Calu3 (cell line): ENCODE measurements at regions of chr3 and their contacts with region 1.

Region 1: GRCh38 chr3:128584412-128585020 is 66.1 kb downstream of the RPN1 start:
- DNase-seq: peak; percentile 96
- H3K4me3 Mint-ChIP-seq: no peak overlapping the region
- H3K27ac Mint-ChIP-seq: no peak overlapping the region
- H3K4me1 Mint-ChIP-seq: peaks cover 16% of the 10 kb centered on the region
- H3K27me3 Mint-ChIP-seq: peaks cover 41% of the 10 kb centered on the region
- CTCF ChIP-seq: peak; percentile 88

Region 2: DNA sequence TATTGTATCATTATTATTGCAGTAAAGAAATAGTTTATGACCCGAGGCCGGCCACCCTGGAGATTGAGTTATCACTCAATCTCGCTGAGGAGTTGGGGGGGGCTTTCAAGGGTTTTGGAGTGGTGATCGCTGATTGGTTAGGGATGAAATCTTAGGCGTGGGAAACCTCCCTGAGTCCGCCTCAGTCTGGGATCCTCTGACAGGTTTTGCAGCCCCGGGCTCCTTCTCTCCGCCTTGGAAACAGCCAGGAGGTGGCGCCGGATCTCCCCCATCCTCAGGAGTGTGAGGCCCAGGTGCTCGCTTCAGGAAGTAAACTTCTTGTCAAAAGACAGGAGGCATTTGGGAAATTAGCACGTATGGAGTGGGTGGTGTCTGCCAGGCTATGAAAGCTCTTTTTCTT is 573.4 kb before region 1 on chr3:
- CTCF ChIA-PET with region 1: no interaction called
- intact Hi-C with region 1: loop called (anchors 10 kb)
- DNase-seq: peak; percentile 94
- H3K4me3 Mint-ChIP-seq: no peak overlapping the region
- H3K27ac Mint-ChIP-seq: no peak overlapping the region
- H3K4me1 Mint-ChIP-seq: peaks cover 22% of the 10 kb centered on the region
- H3K27me3 Mint-ChIP-seq: peaks cover 32% of the 10 kb centered on the region
- CTCF ChIP-seq: peak; percentile 52

Region 3: DNA sequence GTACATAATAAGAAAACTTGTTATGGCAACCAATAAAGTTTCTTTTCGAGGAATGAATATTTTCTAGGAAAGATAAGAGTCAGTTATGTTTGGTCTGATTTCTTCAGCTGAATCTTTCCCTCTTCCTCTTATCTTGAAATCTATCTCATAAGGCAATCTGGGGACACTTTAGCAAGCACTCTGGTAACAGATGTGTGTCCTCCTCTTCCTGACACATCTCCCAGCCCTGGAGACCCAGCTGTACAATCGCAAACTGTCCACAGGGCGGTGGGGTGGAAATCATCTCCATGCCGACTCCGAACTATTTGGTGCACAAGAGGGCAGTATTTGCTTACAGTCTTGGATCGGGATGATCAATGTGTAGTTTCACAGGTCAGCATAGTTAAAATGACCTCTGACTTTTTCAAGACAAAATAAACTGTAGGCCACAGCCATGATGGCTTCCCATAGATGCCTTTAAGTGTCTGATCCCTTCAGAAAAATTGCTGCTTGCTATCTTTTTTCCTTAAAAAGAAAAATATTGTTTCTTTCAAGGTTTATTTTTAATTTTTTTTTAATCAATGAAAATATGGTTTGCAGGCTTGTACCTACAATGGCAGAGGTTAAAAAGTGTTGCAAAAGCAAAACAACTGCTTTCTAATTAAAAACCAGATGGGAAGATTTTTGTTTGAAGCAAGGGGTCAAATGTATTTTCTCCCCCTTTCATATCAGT is 413.6 kb before region 1 on chr3:
- CTCF ChIA-PET with region 1: no interaction called
- intact Hi-C with region 1: loop called (anchors 5 kb)
- DNase-seq: peak; percentile 72
- H3K4me3 Mint-ChIP-seq: no peak overlapping the region
- H3K27ac Mint-ChIP-seq: no peak overlapping the region
- H3K4me1 Mint-ChIP-seq: no peaks in the 10 kb centered on the region
- H3K27me3 Mint-ChIP-seq: no peaks in the 10 kb centered on the region
- CTCF ChIP-seq: peak; percentile 41

Region 4: DNA sequence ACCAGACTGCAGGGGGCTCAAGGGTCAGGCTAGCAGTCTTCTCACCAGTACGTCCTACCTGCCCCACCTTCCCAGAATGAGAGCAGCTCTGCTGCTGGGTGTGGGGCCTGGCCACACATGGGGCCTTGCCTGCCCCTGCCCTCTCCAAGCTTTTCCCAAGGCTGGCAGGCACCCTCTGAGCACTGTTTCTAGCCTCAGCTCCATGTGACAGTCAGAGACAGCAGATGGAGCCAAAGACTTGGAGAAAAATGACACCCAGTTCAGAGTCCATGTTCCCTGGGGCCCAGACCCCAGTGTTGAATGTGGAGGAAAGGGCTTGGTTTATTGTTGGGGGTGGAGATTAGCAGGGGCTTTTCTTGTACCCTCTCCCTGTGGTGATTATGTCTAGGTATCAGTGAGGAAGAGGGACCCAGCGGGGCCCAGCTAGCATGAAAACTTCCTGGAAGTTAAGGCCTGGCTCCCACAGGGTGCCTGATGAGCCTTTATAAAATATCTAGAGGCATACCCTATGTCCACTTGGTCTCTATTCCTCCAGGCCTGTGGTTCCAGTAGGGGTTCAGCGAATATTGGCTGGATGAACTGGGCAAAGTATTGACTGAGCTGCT is 277.4 kb before region 1 on chr3:
- CTCF ChIA-PET with region 1: interaction called, 8 read pairs
- intact Hi-C with region 1: loop called (anchors 10 kb)
- DNase-seq: no peak
- H3K4me3 Mint-ChIP-seq: no peak overlapping the region
- H3K27ac Mint-ChIP-seq: no peak overlapping the region
- H3K4me1 Mint-ChIP-seq: no peaks in the 10 kb centered on the region
- H3K27me3 Mint-ChIP-seq: no peaks in the 10 kb centered on the region
- CTCF ChIP-seq: no peak

Region 5: GRCh38 chr3:128497387-128498126 is 87.0 kb before region 1 on chr3:
- CTCF ChIA-PET with region 1: interaction called, 10 read pairs
- intact Hi-C with region 1: loop called (anchors 5 kb)
- DNase-seq: peak; percentile 90
- H3K4me3 Mint-ChIP-seq: peak overlapping the region; percentile 70
- H3K27ac Mint-ChIP-seq: no peak overlapping the region
- H3K4me1 Mint-ChIP-seq: peaks cover 13% of the 10 kb centered on the region
- H3K27me3 Mint-ChIP-seq: no peaks in the 10 kb centered on the region
- CTCF ChIP-seq: peak; percentile 98

Region 6: DNA sequence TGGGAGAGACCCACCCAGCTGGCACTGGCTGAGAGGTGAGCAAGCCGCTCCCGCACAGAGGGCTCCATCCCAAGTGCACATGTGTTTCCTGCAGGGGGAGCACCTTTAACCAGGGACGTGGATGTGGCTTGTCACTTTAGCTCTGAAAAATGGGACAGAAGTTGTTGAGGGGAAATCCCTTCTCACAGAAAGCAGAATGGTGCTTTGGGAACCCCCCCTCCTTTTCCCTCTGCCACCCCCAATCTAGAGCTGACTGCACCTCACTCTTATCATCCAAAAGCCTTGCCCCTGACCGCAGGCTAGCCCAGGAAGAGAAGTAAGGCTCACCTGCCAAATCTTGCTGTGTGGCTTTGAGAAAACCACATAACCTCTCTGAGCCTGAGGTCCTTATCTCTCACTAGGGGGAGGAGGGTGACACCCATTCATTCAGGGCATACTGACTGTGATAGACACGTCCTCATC is 11.8 kb before region 1 on chr3:
- CTCF ChIA-PET with region 1: interaction called, 19 read pairs
- intact Hi-C with region 1: no loop called
- DNase-seq: peak; percentile 71
- H3K4me3 Mint-ChIP-seq: no peak overlapping the region
- H3K27ac Mint-ChIP-seq: no peak overlapping the region
- H3K4me1 Mint-ChIP-seq: no peaks in the 10 kb centered on the region
- H3K27me3 Mint-ChIP-seq: peaks cover 86% of the 10 kb centered on the region
- CTCF ChIP-seq: peak; percentile 64